Endothelial cell of umbilical vein (primary cell): ENCODE measurements at regions of chr2 and their contacts with region 1.

Region 1: DNA sequence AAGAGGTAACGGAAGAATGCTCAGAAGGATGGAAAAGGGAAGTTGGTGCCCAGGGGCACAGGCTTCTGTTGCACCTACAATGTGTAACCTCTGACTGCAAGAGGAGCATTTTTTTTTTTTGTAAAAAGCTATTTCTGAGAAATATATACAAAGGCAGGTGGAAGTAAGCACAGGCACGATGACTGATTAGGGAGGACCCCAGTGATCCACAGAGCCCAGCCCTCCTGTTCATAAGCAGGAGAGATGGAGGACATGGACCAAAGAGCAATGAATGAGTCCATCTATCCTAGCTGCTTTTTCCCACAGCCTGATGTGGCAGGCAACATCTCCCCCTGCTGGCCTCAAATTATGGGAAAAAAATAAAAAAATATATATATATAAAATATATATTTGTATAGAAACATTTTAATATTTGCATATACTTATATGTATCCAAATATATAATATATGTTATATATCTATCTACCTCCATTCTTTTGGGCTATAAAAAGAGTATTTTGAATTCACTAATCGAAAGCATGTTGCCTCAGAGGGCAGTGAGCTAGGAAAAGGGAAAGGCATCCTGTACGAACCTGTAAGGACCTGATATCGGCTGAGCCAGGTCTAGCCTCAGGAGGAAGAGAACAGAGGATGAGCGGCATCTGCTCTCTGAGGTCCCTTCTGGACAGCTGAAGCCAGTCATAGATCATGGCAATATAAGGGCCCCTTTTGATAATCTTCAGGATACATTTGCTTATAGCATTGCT is 166.0 kb upstream of the STK17B start:
- DNase-seq: peak; percentile 43
- H3K4me3 ChIP-seq: no peak overlapping the region
- H3K27ac ChIP-seq: no peak overlapping the region
- H3K4me1 ChIP-seq: peaks cover 29% of the 10 kb centered on the region
- H3K27me3 ChIP-seq: no peaks in the 10 kb centered on the region
- CTCF ChIP-seq: peak; percentile 26 to 40
- POLR2A ChIP-seq: no peak

Region 2: DNA sequence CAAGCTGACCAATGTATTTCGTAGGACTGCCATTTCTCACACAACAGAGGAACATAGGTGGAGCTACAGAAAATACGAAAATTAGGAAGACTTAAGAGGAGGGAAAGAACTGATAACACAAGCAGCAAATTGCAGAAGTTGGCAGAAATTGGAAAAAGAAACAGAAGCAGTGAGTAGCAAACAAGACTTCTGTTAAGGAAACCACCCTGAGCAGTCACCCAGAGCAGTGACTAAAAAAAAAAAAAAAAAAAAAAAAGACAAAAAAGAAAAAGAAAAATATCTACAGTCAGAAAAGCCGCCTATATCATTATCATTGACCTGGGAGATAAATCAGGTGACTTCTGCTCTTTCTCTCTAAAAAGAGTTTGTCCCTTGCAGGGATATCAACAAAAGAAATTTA is 187.4 kb before region 1 on chr2:
- CTCF ChIA-PET with region 1: no interaction called
- POLR2A ChIA-PET with region 1: no interaction called
- dilution Hi-C with region 1: no loop called
- intact Hi-C with region 1: no loop called
- DNase-seq: no peak
- H3K4me3 ChIP-seq: no peak overlapping the region
- H3K27ac ChIP-seq: no peak overlapping the region
- H3K4me1 ChIP-seq: no peaks in the 10 kb centered on the region
- H3K27me3 ChIP-seq: no peaks in the 10 kb centered on the region
- CTCF ChIP-seq: no peak
- POLR2A ChIP-seq: no peak

Region 3: DNA sequence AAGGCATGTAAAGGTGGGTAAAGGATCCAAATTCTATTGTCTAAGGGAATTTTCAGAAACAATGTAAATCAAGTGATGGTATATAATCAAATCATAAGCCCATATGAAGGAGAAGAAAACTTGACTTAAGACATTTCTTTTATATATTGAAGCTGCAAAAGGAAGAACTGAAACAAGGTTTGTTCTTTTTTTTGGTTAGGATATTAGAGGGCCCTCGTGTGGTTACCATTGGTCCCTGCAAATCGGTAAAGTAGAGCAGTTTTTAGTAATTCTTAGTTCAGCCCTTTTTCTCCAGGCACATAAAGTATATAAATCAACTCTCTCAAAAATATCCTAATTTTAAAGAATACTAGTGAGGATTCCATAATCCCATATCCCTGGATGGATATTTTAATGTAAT is 60.4 kb before region 1 on chr2:
- CTCF ChIA-PET with region 1: interaction called, 11 read pairs
- POLR2A ChIA-PET with region 1: no interaction called
- dilution Hi-C with region 1: no loop called
- intact Hi-C with region 1: no loop called
- DNase-seq: peak; percentile 46
- H3K4me3 ChIP-seq: peak overlapping the region in 2 of 3 experiments; percentile 38 to 60
- H3K27ac ChIP-seq: peak overlapping the region; percentile 14
- H3K4me1 ChIP-seq: peaks cover 58% of the 10 kb centered on the region
- H3K27me3 ChIP-seq: no peaks in the 10 kb centered on the region
- CTCF ChIP-seq: peak; percentile 32 to 41
- POLR2A ChIP-seq: no peak

Region 4: DNA sequence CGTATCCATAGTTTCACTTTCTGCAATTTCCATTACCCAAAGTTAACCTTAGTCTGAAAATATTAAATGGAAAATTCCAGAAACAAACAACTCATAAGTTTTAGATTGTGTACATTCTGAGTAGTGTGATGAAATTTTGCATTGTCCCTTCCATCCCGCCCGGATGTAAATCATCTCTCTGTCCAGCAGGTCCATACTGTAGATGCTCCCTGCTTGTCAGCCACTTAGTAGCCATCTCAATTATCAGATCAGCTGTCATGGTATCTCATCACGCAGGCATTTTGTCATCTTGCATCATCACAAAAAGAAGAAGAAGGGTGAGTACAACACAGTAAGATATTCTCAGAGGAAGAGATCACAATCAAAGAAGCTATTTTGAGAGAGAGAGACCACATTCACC is 19.0 kb after region 1 on chr2:
- CTCF ChIA-PET with region 1: interaction called, 25 read pairs
- POLR2A ChIA-PET with region 1: no interaction called
- dilution Hi-C with region 1: no loop called
- intact Hi-C with region 1: loop called (anchors 2 kb)
- DNase-seq: peak; percentile 48
- H3K4me3 ChIP-seq: peak overlapping the region in 2 of 3 experiments; percentile 8 to 36
- H3K27ac ChIP-seq: no peak overlapping the region
- H3K4me1 ChIP-seq: peaks cover 36% of the 10 kb centered on the region
- H3K27me3 ChIP-seq: no peaks in the 10 kb centered on the region
- CTCF ChIP-seq: no peak
- POLR2A ChIP-seq: no peak

Region 5: DNA sequence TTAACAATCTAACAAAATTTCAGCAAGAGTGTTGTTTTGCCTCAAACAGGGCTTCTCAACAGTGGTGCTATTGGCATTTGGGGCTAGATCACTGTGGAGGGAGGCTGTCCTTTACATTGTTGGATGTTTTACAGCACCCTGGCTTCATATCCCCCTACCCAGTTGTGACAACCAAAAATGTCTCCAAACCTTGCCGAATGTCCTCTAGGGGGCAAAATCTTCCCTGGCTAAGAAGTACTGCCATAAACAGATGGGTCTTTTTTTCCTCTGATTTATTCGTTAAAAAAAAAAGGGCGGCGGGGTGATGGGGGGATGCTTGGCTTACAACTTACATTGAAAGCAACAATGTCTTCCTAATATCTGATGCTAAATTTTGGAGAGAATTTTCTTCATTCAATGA is 94.6 kb after region 1 on chr2:
- CTCF ChIA-PET with region 1: interaction called, 12 read pairs
- POLR2A ChIA-PET with region 1: no interaction called
- dilution Hi-C with region 1: no loop called
- intact Hi-C with region 1: no loop called
- DNase-seq: peak; percentile 28
- H3K4me3 ChIP-seq: no peak overlapping the region
- H3K27ac ChIP-seq: no peak overlapping the region
- H3K4me1 ChIP-seq: peaks cover 55% of the 10 kb centered on the region
- H3K27me3 ChIP-seq: no peaks in the 10 kb centered on the region
- CTCF ChIP-seq: peak; percentile 29 to 38
- POLR2A ChIP-seq: no peak

Region 6: GRCh38 chr2:196792865-196793264 is 455.5 kb after region 1 on chr2:
- CTCF ChIA-PET with region 1: no interaction called
- POLR2A ChIA-PET with region 1: no interaction called
- dilution Hi-C with region 1: no loop called
- intact Hi-C with region 1: no loop called
- DNase-seq: no peak
- H3K4me3 ChIP-seq: no peak overlapping the region
- H3K27ac ChIP-seq: no peak overlapping the region
- H3K4me1 ChIP-seq: peaks cover 1% of the 10 kb centered on the region
- H3K27me3 ChIP-seq: no peaks in the 10 kb centered on the region
- CTCF ChIP-seq: no peak
- POLR2A ChIP-seq: no peak